Activated CD4-positive, alpha-beta T cell treated with anti-CD3 and anti-CD28 coated beads for 36 hours (primary cell): ENCODE measurements at regions of chrX and their contacts with region 1.

Region 1: GRCh38 chrX:79081895-79082512 is 62.5 kb upstream of the GPR174 start:
- DNase-seq: peak; percentile 29
- ATAC-seq: peak; percentile 53
- H3K4me3 Mint-ChIP-seq: peak overlapping the region; percentile 47
- H3K27ac Mint-ChIP-seq: peak overlapping the region; percentile 71
- H3K4me1 Mint-ChIP-seq: peaks cover 37% of the 10 kb centered on the region
- H3K27me3 Mint-ChIP-seq: no peaks in the 10 kb centered on the region

Region 2: DNA sequence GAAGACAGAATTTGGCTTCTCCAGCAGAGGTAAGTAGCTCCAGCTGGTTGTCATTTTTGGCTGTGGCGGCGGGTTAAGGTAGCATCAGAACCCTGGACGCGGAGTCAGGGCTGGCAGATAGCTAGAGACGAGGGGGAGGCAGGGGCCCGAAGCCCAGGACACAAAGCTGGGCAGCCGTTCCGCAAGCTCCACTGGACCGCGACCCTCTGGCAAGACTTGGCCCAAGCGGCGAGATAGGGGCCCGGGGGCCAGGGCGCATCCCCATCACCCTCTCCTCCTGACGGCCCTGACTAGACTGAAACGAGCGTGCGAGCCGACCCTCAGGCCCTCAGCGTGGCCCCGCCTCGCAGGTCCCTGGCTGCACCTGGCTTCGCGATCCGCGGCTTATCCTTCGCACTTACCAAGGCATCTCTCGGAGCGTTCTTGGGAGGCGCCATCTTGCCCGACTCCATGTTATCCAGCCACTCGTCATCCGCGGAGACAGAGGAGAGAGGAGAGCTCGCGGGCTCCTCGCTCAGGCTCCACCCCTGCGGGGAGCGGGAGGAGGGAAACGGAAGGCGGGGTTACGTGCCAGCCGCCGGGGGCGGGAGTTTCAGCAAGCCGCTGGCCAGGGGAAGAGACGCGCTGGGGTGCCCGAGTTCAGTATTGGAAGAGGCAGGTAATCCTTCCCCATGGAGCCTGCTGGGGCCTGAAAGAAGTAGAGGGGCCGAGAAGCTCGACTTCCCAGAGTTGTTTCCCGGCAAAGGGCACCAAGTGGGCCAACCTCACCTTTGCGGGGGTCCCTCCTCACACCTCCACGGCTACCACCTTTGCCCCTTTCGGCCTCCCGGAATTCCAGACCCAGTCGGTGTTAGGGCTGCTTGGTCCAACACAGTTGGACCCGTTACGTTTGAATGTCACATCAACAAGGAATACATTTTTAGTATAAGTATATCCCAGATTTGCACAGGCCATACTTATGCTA is 942.6 kb before region 1 on chrX and contains the start of gene TAF9B:
- CTCF ChIA-PET with region 1: no interaction called
- POLR2A ChIA-PET with region 1: no interaction called
- intact Hi-C with region 1: loop called in 1 of 2 experiments (anchors 10 kb)
- DNase-seq: peak; percentile 90
- ATAC-seq: peak; percentile 95
- H3K4me3 Mint-ChIP-seq: peak within 1 kb of the TSS; percentile 84
- H3K27ac Mint-ChIP-seq: peak within 1 kb of the TSS; percentile 95
- H3K4me1 Mint-ChIP-seq: peaks cover 8% of the 10 kb centered on the region
- H3K27me3 Mint-ChIP-seq: no peaks in the 10 kb centered on the region
- total RNA-seq, gene TAF9B: 17.6 to 18.3 TPM

Region 3: GRCh38 chrX:78595901-78596502 is 486.0 kb before region 1 on chrX:
- CTCF ChIA-PET with region 1: interaction called, 3 read pairs
- POLR2A ChIA-PET with region 1: no interaction called
- intact Hi-C with region 1: loop called in 1 of 2 experiments (anchors 10 kb)
- DNase-seq: peak; percentile 10
- ATAC-seq: no peak
- H3K4me3 Mint-ChIP-seq: no peak overlapping the region
- H3K27ac Mint-ChIP-seq: no peak overlapping the region
- H3K4me1 Mint-ChIP-seq: no peaks in the 10 kb centered on the region
- H3K27me3 Mint-ChIP-seq: no peaks in the 10 kb centered on the region

Region 4: GRCh38 chrX:78945186-78945912 is 136.7 kb before region 1 on chrX and contains the start of gene P2RY10:
- CTCF ChIA-PET with region 1: interaction called, 6 read pairs
- POLR2A ChIA-PET with region 1: no interaction called
- intact Hi-C with region 1: loop called (anchors 2 to 5 kb)
- DNase-seq: peak; percentile 35
- ATAC-seq: peak; percentile 79
- H3K4me3 Mint-ChIP-seq: peak within 1 kb of the TSS; percentile 90
- H3K27ac Mint-ChIP-seq: peak within 1 kb of the TSS; percentile 96
- H3K4me1 Mint-ChIP-seq: peaks cover 57% of the 10 kb centered on the region
- H3K27me3 Mint-ChIP-seq: no peaks in the 10 kb centered on the region
- total RNA-seq, gene P2RY10: 30.4 to 65.7 TPM

Region 5: GRCh38 chrX:79259073-79259689 is 177.2 kb after region 1 on chrX:
- CTCF ChIA-PET with region 1: no interaction called
- POLR2A ChIA-PET with region 1: no interaction called
- intact Hi-C with region 1: loop called in 1 of 2 experiments (anchors 5 kb)
- DNase-seq: peak; percentile 61
- ATAC-seq: peak; percentile 84
- H3K4me3 Mint-ChIP-seq: peak overlapping the region; percentile 52
- H3K27ac Mint-ChIP-seq: peak overlapping the region; percentile 90
- H3K4me1 Mint-ChIP-seq: peaks cover 78% of the 10 kb centered on the region
- H3K27me3 Mint-ChIP-seq: no peaks in the 10 kb centered on the region

Region 6: GRCh38 chrX:79412972-79413371 is 331.0 kb after region 1 on chrX:
- CTCF ChIA-PET with region 1: interaction called, 10 read pairs
- POLR2A ChIA-PET with region 1: no interaction called
- intact Hi-C with region 1: loop called (anchors 2 to 5 kb)
- DNase-seq: no peak
- ATAC-seq: no peak
- H3K4me3 Mint-ChIP-seq: peak overlapping the region; percentile 69
- H3K27ac Mint-ChIP-seq: peak overlapping the region; percentile 60
- H3K4me1 Mint-ChIP-seq: peaks cover 25% of the 10 kb centered on the region
- H3K27me3 Mint-ChIP-seq: no peaks in the 10 kb centered on the region